Activated CD4-positive, alpha-beta memory T cell treated with anti-CD3 and anti-CD28 coated beads for 36 hours (primary cell): ENCODE measurements at regions of chr10 and their contacts with region 1.

Region 1: DNA sequence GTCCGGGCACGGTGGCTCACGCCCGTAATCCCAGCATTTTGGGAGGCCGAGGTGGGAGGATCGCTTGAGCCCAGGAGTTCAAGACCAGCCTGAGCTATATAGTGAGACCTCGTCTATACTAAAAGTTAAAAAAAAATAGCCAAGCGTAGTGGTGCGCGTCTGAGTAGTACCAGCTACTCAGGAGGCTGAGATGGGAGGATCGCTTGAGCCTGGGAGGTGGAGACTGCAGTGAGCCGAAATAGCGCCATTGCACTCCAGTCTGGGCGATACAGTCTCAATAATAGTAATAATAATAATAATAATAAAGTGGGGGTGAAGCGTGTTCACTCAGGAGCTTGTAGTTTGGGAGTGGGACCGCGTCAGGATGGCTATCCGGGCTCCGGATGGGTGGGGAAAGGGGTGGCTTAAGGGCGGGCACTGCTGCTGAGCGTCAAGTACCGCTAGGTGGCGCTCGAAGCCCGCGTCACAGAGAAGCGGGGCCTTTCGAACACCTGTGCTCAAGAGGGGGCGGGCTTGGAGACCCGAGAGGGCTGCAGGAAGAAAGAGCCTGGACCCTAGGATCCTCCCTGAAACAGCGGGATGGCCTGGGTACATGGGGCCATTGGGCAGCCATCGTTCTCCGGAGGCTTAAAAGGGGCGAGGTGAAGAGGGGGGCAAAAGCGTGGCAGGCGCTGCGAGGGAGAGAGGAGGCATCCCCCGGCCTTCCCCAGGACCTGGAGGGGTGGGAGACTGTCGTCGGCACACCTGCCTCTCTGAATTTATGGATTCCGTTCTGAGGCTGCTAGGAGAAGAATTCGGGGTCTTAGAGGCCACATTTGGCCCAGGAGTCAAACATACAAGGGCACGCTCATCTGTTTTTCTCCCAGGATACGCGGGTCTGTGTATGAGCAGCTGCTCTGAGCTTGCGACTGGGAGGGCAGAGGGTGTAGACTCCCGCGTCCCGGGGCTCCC is 14.5 kb downstream of the LBX1 start:
- DNase-seq: peak; percentile 82
- H3K4me3 Mint-ChIP-seq: peak overlapping the region; percentile 31
- H3K27ac Mint-ChIP-seq: no peak overlapping the region
- H3K4me1 Mint-ChIP-seq: peaks cover 44% of the 10 kb centered on the region
- H3K27me3 Mint-ChIP-seq: peaks cover 70% of the 10 kb centered on the region

Region 2: GRCh38 chr10:101161494-101162299 is 53.0 kb before region 1 on chr10:
- CTCF ChIA-PET with region 1: interaction called, 19 read pairs
- POLR2A ChIA-PET with region 1: no interaction called
- intact Hi-C with region 1: loop called (anchors 5 kb)
- DNase-seq: peak; percentile 82
- H3K4me3 Mint-ChIP-seq: no peak overlapping the region
- H3K27ac Mint-ChIP-seq: no peak overlapping the region
- H3K4me1 Mint-ChIP-seq: peaks cover 8% of the 10 kb centered on the region
- H3K27me3 Mint-ChIP-seq: peaks cover 53% of the 10 kb centered on the region

Region 3: DNA sequence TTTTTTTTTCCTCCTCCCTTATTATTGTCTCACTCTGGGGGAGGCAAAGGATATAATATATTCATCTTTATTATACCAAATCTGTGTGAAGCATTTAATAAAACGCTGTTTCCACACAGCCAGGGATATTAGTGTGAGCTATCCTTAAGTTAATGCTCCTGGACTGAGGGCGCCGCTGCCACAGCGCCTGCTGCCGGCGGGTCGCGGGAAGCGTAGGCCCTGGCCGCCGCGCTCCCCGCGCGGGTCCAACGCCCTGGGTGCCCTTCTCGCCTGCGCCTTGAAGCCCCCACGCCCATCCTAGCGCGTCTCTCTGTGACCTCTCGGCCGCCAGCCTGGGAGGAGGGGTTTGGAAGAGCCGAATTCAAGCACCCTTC is 24.0 kb after region 1 on chr10:
- CTCF ChIA-PET with region 1: interaction called, 93 read pairs
- POLR2A ChIA-PET with region 1: no interaction called
- intact Hi-C with region 1: loop called (anchors 2 kb)
- DNase-seq: peak; percentile 43
- H3K4me3 Mint-ChIP-seq: no peak overlapping the region
- H3K27ac Mint-ChIP-seq: no peak overlapping the region
- H3K4me1 Mint-ChIP-seq: peaks cover 14% of the 10 kb centered on the region
- H3K27me3 Mint-ChIP-seq: peaks cover 62% of the 10 kb centered on the region

Region 4: DNA sequence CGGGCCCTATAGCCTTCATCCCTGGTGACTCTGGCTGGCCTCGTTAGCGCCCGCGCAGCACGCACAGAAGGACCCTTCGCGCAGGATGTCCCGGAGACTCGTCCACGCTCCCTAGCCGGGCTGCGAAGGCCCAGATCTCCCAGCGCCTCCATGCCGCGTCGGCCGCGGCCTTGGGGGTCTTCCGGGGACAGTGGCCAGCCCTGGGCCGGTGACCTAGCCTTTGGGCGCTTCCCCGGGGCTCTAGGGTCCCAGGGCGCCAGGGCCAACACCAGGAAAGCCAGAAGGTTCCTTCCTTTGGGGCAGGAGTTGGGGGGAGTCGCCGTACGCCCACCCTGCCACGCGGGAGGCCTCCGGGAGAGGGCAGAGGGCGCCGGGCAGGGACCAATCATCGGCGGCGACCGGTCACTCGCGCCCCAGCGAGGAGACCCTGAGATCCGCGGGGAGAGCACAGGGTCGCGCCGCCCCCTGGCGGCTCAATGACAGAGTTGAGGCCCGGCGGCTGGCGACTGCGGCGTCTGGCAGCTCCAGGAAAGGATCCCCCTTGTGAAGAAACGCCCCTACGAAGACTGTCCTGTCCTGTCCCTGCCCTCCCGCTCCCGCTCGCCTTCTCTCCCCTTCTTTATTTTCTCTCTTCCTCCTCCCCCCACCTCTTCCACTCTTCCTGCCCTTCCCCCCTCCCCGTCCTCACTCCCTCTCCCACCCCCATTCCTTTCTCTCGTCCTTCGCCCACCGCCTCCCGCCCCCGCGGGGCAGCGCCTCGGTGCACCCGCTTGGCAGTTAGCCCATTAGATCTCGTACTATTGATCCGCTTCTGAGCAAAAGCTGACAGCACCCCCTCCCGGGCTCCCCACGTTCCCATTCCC is 76.8 kb after region 1 on chr10:
- CTCF ChIA-PET with region 1: interaction called, 82 read pairs
- POLR2A ChIA-PET with region 1: no interaction called
- intact Hi-C with region 1: loop called (anchors 1 kb)
- DNase-seq: peak; percentile 58
- H3K4me3 Mint-ChIP-seq: peak overlapping the region; percentile 66
- H3K27ac Mint-ChIP-seq: no peak overlapping the region
- H3K4me1 Mint-ChIP-seq: peaks cover 5% of the 10 kb centered on the region
- H3K27me3 Mint-ChIP-seq: peaks cover 65% of the 10 kb centered on the region

Region 5: DNA sequence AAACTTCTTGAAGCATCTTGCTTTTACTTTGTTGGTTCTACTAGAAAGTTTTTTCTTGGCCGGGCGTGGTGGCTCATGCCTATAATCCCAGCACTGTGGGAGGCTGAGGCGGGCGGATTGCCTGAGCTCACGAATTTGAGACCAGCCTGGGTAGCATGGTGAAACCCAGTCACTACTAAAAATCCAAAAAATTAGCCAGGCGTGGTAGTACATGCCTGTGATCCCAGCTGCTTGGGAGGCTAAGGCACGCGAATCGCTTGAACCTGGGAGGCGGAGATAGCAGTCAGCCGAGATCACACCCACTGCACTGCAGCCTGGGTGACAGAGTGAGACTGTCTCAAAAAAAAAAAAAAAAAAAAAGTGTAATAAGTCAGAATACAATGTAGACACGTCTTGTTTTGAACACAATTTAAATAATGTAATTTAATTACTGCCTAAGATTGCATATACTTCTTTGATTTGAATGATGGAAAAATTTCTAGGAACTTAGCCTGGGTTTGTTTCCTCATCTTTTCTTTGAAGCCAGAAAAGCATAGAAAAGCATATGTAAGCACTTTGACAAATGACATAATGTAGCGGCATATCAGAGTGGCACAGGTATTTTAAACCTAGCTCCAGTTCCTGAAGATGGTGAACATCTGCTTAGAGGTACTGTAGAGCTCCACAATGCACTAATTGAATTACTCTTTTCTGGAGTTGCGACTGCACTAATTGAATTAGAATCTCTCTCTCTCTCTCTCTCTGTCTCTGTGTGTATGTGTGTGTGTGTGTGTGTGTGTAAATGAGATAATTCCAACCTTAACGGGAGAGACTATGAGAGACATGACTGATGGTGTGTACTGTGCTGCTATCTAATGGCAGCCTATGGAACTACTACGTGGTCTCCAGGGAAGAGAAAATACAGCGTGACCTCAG is 227.1 kb after region 1 on chr10:
- CTCF ChIA-PET with region 1: interaction called, 42 read pairs
- POLR2A ChIA-PET with region 1: no interaction called
- intact Hi-C with region 1: loop called (anchors 2 kb)
- DNase-seq: peak; percentile 12
- H3K4me3 Mint-ChIP-seq: no peak overlapping the region
- H3K27ac Mint-ChIP-seq: no peak overlapping the region
- H3K4me1 Mint-ChIP-seq: peaks cover 8% of the 10 kb centered on the region
- H3K27me3 Mint-ChIP-seq: no peaks in the 10 kb centered on the region

Region 6: DNA sequence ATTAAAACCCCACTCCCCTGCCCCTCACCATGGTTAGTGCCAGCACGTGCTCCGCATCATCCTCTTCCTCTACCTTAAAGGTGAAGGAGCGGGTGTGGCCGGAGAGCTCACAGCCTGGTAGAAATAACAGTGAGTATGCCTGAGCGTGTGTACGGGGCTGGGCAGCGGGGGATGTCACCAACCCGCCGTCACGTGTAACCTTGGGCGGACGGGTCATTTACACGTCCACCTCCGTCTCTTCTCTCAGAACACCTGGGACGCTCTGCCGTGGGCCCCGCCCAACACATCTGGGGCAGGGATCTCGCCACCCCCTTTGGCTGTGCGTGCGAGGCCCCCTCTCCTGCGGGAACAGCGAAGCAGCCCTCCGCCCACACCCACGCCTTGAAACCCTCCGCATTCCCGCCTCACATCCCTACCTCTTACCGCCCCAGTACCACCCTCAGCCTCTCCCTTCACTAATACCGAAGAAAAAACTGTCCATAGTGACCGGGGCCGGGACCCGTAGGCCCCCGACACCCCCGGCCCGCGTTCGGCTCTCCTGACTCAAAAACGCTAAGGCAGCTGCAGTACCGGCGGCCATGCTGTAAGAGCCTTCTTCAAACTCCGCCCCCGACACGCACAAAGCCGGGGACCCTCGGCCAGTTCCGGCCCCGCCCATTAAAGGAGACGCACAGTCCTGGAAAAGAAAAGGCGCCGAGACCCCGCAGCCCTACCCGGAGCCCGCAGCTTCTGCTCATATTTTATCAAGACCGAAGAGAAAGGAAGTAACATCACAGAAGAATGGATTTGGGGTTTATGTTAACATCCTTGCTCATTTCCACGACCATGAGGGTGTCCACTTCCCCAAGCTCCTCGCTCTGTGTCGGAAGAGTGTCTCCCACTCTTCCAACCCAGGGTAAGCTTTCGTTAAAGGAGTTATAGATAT is 568.4 kb after region 1 on chr10 and contains the start of gene NPM3:
- CTCF ChIA-PET with region 1: interaction called, 16 read pairs
- POLR2A ChIA-PET with region 1: no interaction called
- intact Hi-C with region 1: loop called (anchors 2 kb)
- DNase-seq: peak; percentile 92
- H3K4me3 Mint-ChIP-seq: peak within 1 kb of the TSS; percentile 98
- H3K27ac Mint-ChIP-seq: peak within 1 kb of the TSS; percentile 83
- H3K4me1 Mint-ChIP-seq: peaks cover 67% of the 10 kb centered on the region
- H3K27me3 Mint-ChIP-seq: peaks cover 10% of the 10 kb centered on the region
- total RNA-seq, gene NPM3: 168 to 172 TPM